Spleen (tissue), 13 donors: ENCODE measurements at regions of chr1 and their contacts with region 1.

Region 1: GRCh38 chr1:37323486-37324377 is 150.6 kb upstream of the ZC3H12A start:
- DNase-seq: peak; percentile 66
- H3K4me3 ChIP-seq: no peak overlapping the region
- H3K27ac ChIP-seq: no peak overlapping the region
- H3K4me1 ChIP-seq: no peaks in the 10 kb centered on the region
- H3K27me3 ChIP-seq: peaks cover 0 to 70% (median 13%) of the 10 kb centered on the region in 7 donors
- CTCF ChIP-seq: peak; percentile 42 to 79 (median 59)
- POLR2A ChIP-seq: no peak

Region 2: DNA sequence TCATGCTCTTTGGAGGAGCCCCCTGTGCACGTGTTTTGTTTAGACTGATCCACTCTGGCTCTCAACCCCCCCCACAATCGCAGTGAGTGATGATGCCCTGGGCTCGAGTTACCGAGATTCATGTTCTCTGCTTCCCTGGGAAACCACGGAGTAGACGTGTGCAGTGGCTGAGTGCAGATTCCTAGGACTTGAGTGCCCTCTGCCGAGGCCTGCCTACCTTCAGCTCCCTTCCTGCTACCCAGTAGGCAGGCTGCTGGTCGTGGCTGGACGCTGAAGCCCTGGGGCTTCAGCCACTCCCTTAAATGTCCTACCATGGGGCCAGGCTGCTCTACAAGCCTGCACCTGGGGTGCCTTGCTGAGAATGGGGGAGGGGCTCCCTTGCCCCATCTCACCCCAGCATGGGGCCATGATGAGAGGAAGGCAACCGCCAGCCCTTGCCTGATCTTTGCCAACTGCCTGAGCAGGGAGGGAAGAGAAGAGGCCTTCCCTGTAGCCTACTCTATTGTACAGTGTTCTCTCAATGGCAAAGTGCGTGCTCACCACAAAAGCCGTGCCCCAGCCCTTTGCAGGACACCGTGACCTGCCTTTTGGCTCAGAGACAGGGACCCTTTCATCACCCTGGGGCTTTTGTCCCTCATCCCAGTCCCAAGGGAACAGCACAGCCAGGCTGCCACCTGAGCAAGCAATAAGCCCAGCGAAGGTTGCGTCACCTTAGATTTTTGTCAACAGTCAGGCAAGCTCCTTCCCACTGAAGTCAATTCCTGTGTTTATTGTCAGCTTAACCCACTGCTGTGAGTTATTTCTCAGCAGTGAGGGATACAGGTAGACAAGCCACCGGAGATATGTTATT is 285.3 kb before region 1 on chr1:
- intact Hi-C with region 1: loop called (anchors 10 kb)
- DNase-seq: no peak
- H3K4me3 ChIP-seq: no peak overlapping the region
- H3K27ac ChIP-seq: no peak overlapping the region
- H3K4me1 ChIP-seq: peaks cover 8 to 34% (median 30%) of the 10 kb centered on the region in 6 donors
- H3K27me3 ChIP-seq: peaks cover 0 to 100% (median 77%) of the 10 kb centered on the region in 7 donors
- CTCF ChIP-seq: peak in 4 of 11 experiments; percentile 18 to 44 (median 26)
- POLR2A ChIP-seq: no peak

Region 3: DNA sequence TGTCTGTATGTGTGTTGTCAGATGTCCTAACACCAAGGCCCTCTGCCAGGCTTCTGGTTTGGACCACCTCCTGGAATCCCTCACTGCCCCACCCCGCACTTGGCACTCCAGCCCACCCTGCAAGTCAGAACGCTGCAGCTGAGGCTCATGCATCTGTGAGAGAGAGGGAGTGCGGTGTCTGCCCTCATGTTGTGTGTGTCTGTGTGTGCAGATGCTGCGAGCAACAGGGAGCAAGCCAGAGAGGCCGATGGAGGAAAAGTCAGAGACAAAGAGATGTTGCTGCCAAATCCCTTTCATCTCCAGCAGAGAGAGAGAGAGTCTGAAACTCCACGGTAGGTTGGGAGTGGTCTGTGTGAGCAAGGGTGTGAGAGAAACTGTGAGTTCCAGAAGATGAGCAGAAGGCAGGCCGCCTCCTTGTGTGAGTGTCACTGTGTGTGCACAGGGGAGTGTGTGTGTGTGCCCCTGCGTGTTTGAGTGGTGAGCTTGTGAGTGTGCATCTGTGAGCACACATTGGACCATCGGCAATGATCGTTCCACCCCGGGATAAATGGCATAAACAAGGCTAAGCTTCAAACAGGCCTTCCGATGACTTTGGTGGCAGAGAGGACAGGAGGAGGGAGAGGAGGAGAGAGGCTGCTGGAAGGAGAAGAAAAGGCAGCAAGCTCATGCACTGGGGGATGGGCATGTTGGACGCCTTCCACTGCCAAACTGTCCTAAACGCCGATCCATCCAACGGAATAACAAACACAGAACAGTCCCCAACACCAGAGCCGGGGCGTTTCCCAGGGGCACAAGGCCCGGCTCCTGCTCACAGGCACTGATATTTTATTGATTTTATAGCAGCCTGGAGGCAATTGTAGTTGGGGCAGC is 190.2 kb before region 1 on chr1:
- intact Hi-C with region 1: no loop called
- DNase-seq: no peak
- H3K4me3 ChIP-seq: no peak overlapping the region
- H3K27ac ChIP-seq: no peak overlapping the region
- H3K4me1 ChIP-seq: no peaks in the 10 kb centered on the region
- H3K27me3 ChIP-seq: peaks cover 0 to 62% (median 0%) of the 10 kb centered on the region in 7 donors
- CTCF ChIP-seq: no peak
- POLR2A ChIP-seq: no peak

Region 4: GRCh38 chr1:37362594-37363385 is 39.1 kb after region 1 on chr1:
- intact Hi-C with region 1: no loop called
- DNase-seq: no peak
- H3K4me3 ChIP-seq: no peak overlapping the region
- H3K27ac ChIP-seq: no peak overlapping the region
- H3K4me1 ChIP-seq: no peaks in the 10 kb centered on the region
- H3K27me3 ChIP-seq: peaks cover 0 to 89% (median 0%) of the 10 kb centered on the region in 7 donors
- CTCF ChIP-seq: no peak
- POLR2A ChIP-seq: no peak

Region 5: DNA sequence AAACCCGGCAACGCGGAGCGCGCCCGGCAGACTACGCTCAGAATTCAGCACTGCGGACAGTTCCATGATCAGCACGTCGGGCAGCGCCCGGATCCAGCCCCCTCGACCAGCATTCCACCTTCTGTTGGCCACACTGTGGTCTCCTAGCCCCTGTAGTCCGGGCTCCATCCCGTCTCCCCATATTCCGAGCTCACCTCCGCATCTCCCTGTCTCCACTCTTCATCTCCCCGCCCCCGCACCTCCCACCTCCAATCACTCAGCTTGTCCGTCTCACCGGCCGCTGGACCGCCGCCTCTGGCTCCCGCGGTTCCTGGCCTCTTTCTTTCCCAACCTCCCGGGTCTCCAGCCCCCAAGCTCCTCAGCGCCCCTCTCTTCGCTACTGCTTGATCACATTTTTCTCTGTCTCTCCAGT is 440.7 kb after region 1 on chr1:
- intact Hi-C with region 1: no loop called
- DNase-seq: no peak
- H3K4me3 ChIP-seq: no peak overlapping the region
- H3K27ac ChIP-seq: no peak overlapping the region
- H3K4me1 ChIP-seq: peaks cover 0 to 18% (median 0%) of the 10 kb centered on the region in 6 donors
- H3K27me3 ChIP-seq: peaks cover 0 to 100% (median 55%) of the 10 kb centered on the region in 7 donors
- CTCF ChIP-seq: no peak
- POLR2A ChIP-seq: no peak